ENCODE measurements at regions of chr12 and their contacts with region 1.

Region 1: GRCh38 chr12:17841496-17841895 is 248.5 kb downstream of the RERGL start:
- DNase-seq: peak in 1 of 4 donors; percentile 6
- ATAC-seq: no peak
- H3K4me3 ChIP-seq: no peak overlapping the region
- H3K27ac ChIP-seq: no peak overlapping the region
- H3K4me1 ChIP-seq: no peaks in the 10 kb centered on the region
- H3K27me3 ChIP-seq: no peaks in the 10 kb centered on the region
- CTCF ChIP-seq: no peak

Region 2: DNA sequence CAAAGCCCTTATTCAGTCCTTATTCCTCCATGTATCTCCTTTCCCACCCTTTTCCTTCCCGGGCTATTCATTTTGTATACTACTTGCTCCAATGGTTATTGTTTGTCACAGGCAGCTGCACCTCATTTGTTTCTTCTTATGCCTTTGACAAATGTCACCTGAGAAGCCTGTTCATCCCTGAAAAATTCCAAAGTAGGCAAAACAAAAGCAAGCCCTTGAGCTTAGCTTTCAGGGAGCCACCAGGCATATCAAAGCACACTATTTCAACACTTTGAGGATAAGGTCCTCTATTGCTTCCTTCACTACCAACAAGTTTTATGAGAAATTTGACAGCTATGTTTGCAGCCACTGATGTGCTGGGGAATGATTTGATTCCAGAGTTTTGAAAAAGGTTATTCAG is 496.8 kb before region 1 on chr12:
- intact Hi-C with region 1: no loop called
- DNase-seq: no peak
- ATAC-seq: no peak
- H3K4me3 ChIP-seq: no peak overlapping the region
- H3K27ac ChIP-seq: no peak overlapping the region
- H3K4me1 ChIP-seq: no peaks in the 10 kb centered on the region
- H3K27me3 ChIP-seq: no peaks in the 10 kb centered on the region
- CTCF ChIP-seq: no peak

Region 3: DNA sequence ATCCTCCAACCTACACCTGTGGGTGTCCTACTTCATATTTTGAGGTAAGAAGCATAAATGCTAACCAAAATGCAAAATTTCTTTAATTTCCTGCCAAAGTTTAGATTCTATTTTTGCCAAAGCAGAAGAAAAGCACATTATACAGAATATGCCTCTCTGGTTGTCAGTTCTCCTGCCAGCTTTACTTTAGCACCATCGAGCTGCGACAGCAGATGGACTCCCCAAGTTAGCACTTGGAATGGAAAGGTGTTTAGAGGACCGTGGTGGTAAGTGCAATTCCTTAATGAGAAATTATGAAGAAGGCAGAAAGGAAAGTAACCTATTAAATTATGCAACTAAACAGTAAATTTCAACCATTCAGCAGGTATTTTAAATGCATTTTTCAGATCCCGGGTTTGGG is 78.1 kb before region 1 on chr12:
- intact Hi-C with region 1: loop called in 1 of 2 experiments (anchors 10 kb)
- DNase-seq: no peak
- ATAC-seq: no peak
- H3K4me3 ChIP-seq: no peak overlapping the region
- H3K27ac ChIP-seq: no peak overlapping the region
- H3K4me1 ChIP-seq: no peaks in the 10 kb centered on the region
- H3K27me3 ChIP-seq: no peaks in the 10 kb centered on the region
- CTCF ChIP-seq: no peak

Region 4: DNA sequence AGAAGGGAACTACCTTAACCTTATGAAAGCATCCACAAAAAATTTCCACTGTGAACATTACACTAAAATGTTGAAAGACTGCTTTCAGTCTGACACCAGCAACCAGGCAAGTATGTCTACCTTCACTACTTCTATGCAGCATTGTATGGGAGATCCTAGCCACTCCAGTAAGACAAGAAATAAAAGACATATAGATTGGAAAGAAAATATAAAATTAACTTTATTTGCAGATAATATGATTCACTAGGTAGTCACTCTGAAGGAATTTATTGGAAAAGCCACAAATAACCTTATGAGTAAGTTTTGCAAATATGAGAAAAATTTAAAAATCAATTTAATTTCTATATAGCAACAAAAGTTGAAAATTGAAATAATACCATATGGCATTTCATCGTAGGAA is 76.5 kb after region 1 on chr12:
- intact Hi-C with region 1: no loop called
- DNase-seq: no peak
- ATAC-seq: no peak
- H3K4me3 ChIP-seq: no peak overlapping the region
- H3K27ac ChIP-seq: no peak overlapping the region
- H3K4me1 ChIP-seq: no peaks in the 10 kb centered on the region
- H3K27me3 ChIP-seq: no peaks in the 10 kb centered on the region
- CTCF ChIP-seq: no peak